Testis (tissue), 5 donors: ENCODE measurements at regions of chr1 and their contacts with region 1.

Region 1: GRCh38 chr1:172745014-172745413 is 86.1 kb downstream of the FASLG start:
- DNase-seq: peak; percentile 33
- H3K4me3 ChIP-seq: no peak overlapping the region
- H3K27ac ChIP-seq: no peak overlapping the region
- H3K4me1 ChIP-seq: no peaks in the 10 kb centered on the region
- H3K27me3 ChIP-seq: no peaks in the 10 kb centered on the region
- CTCF ChIP-seq: peak; percentile 36 to 63 (median 43)
- POLR2A ChIP-seq: no peak

Region 2: DNA sequence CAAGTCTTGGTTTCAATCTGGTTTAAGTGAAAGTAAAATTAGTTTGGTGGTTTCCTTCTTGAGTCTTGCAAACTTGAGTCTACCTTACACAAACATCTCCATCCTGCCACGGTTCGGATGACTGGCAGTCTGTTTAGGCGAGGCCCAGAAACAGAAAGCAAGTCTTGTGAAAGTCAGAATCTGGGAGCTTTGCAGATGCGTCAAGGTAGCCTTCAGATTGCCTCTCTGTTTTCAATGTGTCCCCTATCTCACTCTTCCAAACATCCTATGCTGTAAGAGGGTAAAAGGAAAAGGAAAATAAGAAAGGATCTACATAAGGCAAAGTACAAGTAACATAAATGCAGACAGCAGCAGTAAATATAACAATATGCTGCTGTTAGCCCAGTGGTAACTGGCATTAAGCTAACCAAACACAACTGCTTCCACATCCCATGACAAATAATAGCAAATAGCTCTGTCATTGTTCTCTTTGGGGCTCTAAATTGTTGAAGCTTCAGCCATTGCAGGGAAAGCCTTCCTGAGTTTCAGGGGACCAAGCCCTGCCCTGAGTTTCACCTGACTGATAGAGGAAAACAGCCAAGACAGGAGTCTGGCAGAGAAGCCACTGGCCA is 350.8 kb before region 1 on chr1:
- intact Hi-C with region 1: no loop called
- DNase-seq: no peak
- H3K4me3 ChIP-seq: no peak overlapping the region
- H3K27ac ChIP-seq: peak overlapping the region in 1 of 2 donors; percentile 22
- H3K4me1 ChIP-seq: peaks cover 23% of the 10 kb centered on the region
- H3K27me3 ChIP-seq: no peaks in the 10 kb centered on the region
- CTCF ChIP-seq: no peak
- POLR2A ChIP-seq: no peak

Region 3: GRCh38 chr1:172699111-172699510 is 45.9 kb before region 1 on chr1:
- intact Hi-C with region 1: no loop called
- DNase-seq: no peak
- H3K4me3 ChIP-seq: no peak overlapping the region
- H3K27ac ChIP-seq: no peak overlapping the region
- H3K4me1 ChIP-seq: no peaks in the 10 kb centered on the region
- H3K27me3 ChIP-seq: no peaks in the 10 kb centered on the region
- CTCF ChIP-seq: no peak
- POLR2A ChIP-seq: no peak

Region 4: DNA sequence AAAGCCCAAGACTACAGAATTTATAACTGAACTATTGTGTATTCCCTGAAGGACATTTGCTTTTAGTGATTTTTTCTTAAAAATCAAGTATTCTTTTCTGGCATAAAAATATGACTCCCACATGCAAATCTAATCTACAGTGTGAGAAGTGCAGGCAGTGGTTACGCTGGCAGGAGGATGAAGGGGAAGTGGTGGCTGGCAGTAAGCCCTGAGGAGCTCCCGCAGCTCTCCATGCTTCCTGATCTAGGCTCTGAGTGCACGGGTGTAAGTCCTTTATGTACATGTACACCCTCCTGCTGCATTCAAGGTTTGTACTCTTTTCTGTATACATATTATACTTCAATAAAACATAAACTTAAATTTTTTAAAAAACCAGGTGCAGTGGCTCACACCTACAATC is 664.6 kb after region 1 on chr1:
- intact Hi-C with region 1: loop called (anchors 10 kb)
- DNase-seq: peak; percentile 80
- H3K4me3 ChIP-seq: no peak overlapping the region
- H3K27ac ChIP-seq: no peak overlapping the region
- H3K4me1 ChIP-seq: peaks cover 41% of the 10 kb centered on the region
- H3K27me3 ChIP-seq: no peaks in the 10 kb centered on the region
- CTCF ChIP-seq: no peak
- POLR2A ChIP-seq: no peak